Posterior vena cava (tissue), 2 donors: ENCODE measurements at regions of chr13 and their contacts with region 1.

Region 1: DNA sequence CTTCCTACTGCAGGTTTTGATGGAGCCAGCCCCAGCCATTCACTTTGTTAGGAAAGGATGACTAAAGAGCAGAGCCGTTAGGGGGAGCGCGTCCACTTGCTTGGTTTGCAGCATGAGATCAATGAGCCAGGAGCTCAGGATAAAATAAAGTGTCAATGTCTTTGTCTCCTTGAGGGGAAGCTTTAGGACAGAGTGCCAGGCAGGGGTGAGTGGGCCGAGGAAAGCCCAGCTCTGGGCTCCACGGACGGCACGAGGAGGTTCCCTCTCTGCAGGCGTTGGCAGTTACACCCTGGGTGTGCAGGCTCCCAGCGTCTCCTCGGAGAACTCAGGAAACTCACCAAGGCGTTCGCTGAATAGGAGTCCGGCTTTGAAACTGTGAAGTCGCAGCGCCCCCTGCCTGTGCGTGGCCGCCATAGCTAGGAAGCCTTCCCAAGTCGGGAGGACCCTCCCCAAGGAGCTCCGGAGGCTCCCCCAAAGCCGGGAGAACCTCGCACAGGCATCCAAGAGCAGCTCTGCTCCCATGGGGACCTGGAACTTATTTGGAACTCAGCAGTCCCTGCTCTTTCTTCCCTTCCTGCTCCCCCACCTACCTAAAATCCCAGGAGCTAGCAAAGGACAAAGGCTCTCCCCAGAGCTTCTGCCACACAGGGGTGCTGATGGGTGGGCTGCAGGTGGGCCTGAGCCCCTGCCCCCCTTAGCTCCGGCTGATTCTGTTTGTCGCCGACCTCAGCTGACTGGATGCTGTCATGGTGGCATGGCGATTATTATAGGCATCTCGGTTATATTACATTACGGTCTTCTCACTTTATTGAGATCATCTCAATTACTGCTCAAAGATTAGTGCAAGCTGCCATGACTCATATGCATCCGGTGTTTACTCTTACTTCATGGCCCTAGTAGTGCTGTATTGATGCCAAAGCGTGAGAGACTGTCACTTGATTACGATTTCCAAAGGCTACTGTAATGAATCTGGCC is 34.4 kb downstream of the GSX1 start:
- DNase-seq: peak; percentile 93

Region 2: GRCh38 chr13:26946684-26947343 is 879.9 kb before region 1 on chr13:
- intact Hi-C with region 1: loop called in 1 of 2 experiments (anchors 5 kb)
- DNase-seq: no peak

Region 3: DNA sequence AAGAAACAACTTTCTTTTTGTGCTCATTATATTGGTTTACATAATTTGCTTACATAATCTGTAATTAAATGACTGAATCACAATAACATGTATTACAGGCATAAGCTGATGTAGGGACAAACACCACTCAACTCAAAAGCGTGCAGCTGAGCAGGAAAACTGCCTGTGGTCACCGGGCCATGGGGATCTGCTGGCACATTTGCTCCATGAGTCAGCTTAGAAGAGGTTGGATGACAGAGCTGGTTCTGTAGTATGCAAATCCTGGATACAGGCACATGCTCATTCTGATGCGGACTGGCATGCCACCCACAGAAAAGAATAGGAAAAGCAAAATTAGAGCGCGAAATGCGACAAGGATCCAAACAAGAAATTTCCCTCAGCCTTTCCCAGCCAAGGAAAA is 783.7 kb before region 1 on chr13:
- intact Hi-C with region 1: no loop called
- DNase-seq: no peak

Region 4: GRCh38 chr13:27374650-27375049 is 452.0 kb before region 1 on chr13:
- intact Hi-C with region 1: loop called (anchors 5 to 10 kb)
- DNase-seq: peak; percentile 87

Region 5: GRCh38 chr13:27533155-27533643 is 293.5 kb before region 1 on chr13:
- intact Hi-C with region 1: loop called (anchors 5 kb)
- DNase-seq: peak; percentile 96

Region 6: GRCh38 chr13:27977476-27978300 is 151.0 kb after region 1 on chr13:
- intact Hi-C with region 1: loop called (anchors 5 to 10 kb)
- DNase-seq: no peak